Mammary epithelial cell (primary cell): ENCODE measurements at regions of chr3 and their contacts with region 1.

Region 1: GRCh38 chr3:110754212-110754916 is 317.3 kb upstream of the NECTIN3 start:
- DNase-seq: no peak
- H3K4me3 ChIP-seq: no peak overlapping the region
- H3K27ac ChIP-seq: no peak overlapping the region
- H3K4me1 ChIP-seq: no peaks in the 10 kb centered on the region
- H3K27me3 ChIP-seq: no peaks in the 10 kb centered on the region
- CTCF ChIP-seq: no peak

Region 2: DNA sequence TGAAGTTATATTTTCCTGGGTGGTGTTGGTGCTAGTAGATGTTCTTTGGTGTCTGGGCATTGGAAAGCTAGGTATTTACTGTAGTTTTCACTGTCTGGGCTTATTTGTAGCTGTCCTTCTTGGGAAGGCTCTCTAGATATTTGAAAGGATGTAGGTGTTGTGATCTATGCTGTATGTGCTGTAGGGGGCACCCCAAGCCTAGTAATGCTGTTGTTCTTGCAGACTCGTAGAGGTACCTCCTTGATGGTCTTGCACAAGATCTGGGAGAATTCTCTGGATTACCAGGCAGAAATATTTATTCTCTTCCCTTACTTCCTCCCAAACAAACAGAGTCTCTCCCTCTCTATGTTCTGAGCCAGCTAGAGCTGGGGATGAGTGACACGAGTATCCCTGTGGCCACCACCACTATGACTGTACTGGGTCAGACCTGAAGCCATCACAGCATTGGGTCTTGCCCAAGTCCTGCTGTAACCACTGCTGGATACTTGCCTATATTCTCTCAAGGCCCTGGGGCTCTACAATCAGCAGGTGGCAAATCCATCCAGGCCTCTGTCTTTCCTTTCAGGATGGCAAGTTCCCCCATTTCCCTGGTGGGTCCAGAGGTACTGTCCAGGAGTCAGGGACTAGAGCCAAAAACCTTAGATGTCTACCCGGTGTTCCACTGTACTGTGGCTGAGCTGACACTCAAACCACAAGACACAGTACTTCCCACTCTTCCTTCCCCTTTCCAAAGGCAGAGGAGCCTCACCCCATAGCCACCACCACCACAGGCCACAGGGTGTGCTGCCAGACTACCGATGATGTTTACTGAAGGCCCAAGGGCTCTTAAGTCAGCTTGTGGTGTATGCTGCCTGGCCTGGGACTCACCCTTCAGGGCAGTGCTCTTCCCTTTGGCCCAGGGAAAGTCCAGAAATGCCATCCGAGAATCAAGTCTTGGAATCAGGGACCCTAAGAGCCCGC is 1221.8 kb before region 1 on chr3:
- CTCF ChIA-PET with region 1: no interaction called
- dilution Hi-C with region 1: no loop called
- in situ Hi-C with region 1: no loop called
- intact Hi-C with region 1: no loop called
- DNase-seq: peak; percentile 69
- H3K4me3 ChIP-seq: no peak overlapping the region
- H3K27ac ChIP-seq: no peak overlapping the region
- H3K4me1 ChIP-seq: no peaks in the 10 kb centered on the region
- H3K27me3 ChIP-seq: no peaks in the 10 kb centered on the region
- CTCF ChIP-seq: peak; percentile 18 to 60

Region 3: DNA sequence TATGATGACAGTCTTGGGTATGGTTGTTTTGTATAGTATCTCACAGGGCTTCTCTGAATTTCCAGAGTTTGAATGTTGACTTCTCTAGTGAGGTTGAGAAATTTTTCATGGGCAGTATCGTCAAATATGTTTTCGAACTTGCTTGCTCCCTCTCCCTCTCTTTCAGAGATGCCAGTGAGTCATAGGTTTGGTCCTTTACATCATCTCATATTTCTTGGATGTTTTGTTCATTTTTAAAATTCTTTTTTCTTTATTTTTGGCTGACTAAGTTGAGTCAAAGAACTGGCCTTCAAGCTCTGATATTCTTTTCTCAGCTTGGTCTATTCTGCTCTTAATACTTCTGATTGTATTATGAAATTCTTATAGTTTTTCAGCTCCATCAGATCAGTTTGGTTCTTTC is 35.0 kb after region 1 on chr3:
- CTCF ChIA-PET with region 1: no interaction called
- dilution Hi-C with region 1: loop called (anchors 5 kb)
- in situ Hi-C with region 1: no loop called
- intact Hi-C with region 1: no loop called
- DNase-seq: no peak
- H3K4me3 ChIP-seq: no peak overlapping the region
- H3K27ac ChIP-seq: no peak overlapping the region
- H3K4me1 ChIP-seq: no peaks in the 10 kb centered on the region
- H3K27me3 ChIP-seq: no peaks in the 10 kb centered on the region
- CTCF ChIP-seq: no peak